CD8-positive, alpha-beta T cell (primary cell): ENCODE measurements at regions of chr12 and their contacts with region 1.

Region 1: DNA sequence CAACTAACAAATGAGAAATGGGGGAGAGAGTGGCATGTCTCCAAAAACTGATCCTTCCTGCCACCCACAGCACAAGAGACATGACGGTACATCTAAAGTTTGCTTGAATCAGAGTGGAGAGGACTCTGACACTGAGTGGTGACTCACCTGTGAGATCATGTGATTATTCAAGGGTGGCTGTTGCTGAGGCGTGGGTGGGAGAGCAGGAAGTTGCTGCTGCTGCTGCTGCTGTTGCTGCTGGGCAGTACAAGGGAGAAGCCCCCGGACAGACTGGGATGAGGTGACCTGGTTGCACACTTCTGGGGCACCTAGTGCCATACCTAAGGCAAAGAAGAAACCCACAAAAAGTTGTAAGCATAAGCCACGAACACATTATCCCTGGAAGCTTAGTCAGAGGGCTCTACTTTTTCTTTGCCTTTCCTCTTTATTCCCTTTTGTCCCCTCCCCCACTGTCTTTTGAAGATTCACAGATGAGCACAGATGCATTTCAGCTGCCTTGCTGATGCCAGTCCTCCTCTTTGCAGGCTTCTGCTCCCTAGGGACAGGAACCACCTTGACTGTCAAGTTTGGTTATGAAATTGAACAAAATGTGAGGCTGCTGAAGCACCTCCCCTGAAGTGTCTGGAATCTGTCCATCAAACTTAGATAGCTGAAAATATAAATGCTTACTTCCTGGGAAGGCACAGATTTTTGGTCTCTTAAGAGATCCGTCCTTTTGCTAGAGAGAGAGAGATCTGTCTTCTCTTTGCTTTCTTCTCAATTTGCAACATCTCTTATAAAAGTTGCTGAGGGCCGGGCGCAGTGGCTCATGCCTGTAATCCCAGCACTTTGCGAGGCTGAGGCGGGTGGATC is 29.4 kb upstream of the STAC3 start:
- DNase-seq: peak; percentile 15 to 82 (median 67)
- ATAC-seq: peak; percentile 99
- H3K4me3 ChIP-seq: no peak overlapping the region
- H3K4me3 Mint-ChIP-seq: peak overlapping the region; percentile 59
- H3K27ac ChIP-seq: peak overlapping the region; percentile 54 to 69
- H3K27ac Mint-ChIP-seq: peak overlapping the region; percentile 94
- H3K4me1 ChIP-seq: peaks cover 15% of the 10 kb centered on the region
- H3K4me1 Mint-ChIP-seq: peaks cover 21% of the 10 kb centered on the region
- H3K27me3 ChIP-seq: no peaks in the 10 kb centered on the region
- H3K27me3 Mint-ChIP-seq: no peaks in the 10 kb centered on the region
- CTCF ChIP-seq: no peak

Region 2: GRCh38 chr12:56873382-56873781 is 407.1 kb before region 1 on chr12:
- CTCF ChIA-PET with region 1: no interaction called
- POLR2A ChIA-PET with region 1: no interaction called
- intact Hi-C with region 1: no loop called
- DNase-seq: no peak
- ATAC-seq: no peak
- H3K4me3 ChIP-seq: no peak overlapping the region
- H3K4me3 Mint-ChIP-seq: no peak overlapping the region
- H3K27ac ChIP-seq: no peak overlapping the region
- H3K27ac Mint-ChIP-seq: no peak overlapping the region
- H3K4me1 ChIP-seq: no peaks in the 10 kb centered on the region
- H3K4me1 Mint-ChIP-seq: no peaks in the 10 kb centered on the region
- H3K27me3 ChIP-seq: no peaks in the 10 kb centered on the region
- H3K27me3 Mint-ChIP-seq: peaks cover 16% of the 10 kb centered on the region
- CTCF ChIP-seq: no peak

Region 3: GRCh38 chr12:57261428-57261865 is 19.0 kb before region 1 on chr12:
- CTCF ChIA-PET with region 1: interaction called, 5 read pairs
- POLR2A ChIA-PET with region 1: no interaction called
- intact Hi-C with region 1: loop called in 1 of 2 experiments (anchors 2 kb)
- DNase-seq: no peak
- ATAC-seq: no peak
- H3K4me3 ChIP-seq: no peak overlapping the region
- H3K4me3 Mint-ChIP-seq: no peak overlapping the region
- H3K27ac ChIP-seq: no peak overlapping the region
- H3K27ac Mint-ChIP-seq: no peak overlapping the region
- H3K4me1 ChIP-seq: no peaks in the 10 kb centered on the region
- H3K4me1 Mint-ChIP-seq: peaks cover 5% of the 10 kb centered on the region
- H3K27me3 ChIP-seq: no peaks in the 10 kb centered on the region
- H3K27me3 Mint-ChIP-seq: no peaks in the 10 kb centered on the region
- CTCF ChIP-seq: no peak

Region 4: DNA sequence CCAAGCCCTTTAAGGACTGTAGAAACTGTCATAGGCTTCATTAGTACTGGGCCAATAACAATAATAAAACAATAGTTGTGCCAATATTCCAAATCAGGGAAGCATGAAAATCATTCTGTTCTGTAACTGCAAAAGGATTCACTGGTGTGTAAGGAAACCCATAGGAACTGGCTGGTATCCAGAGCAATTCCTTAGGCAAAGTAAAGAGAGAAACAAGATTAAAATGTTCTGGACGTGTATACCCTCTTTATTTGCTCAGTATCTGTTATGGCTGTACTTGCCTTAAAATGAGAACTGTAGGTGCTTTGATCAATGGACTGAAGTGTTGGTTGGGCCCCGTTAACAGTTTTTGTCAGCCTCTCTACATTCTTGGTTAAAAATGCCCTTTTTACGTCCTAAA is 43.0 kb after region 1 on chr12:
- CTCF ChIA-PET with region 1: no interaction called
- POLR2A ChIA-PET with region 1: no interaction called
- intact Hi-C with region 1: no loop called
- DNase-seq: no peak
- ATAC-seq: no peak
- H3K4me3 ChIP-seq: no peak overlapping the region
- H3K4me3 Mint-ChIP-seq: no peak overlapping the region
- H3K27ac ChIP-seq: no peak overlapping the region
- H3K27ac Mint-ChIP-seq: no peak overlapping the region
- H3K4me1 ChIP-seq: no peaks in the 10 kb centered on the region
- H3K4me1 Mint-ChIP-seq: peaks cover 6% of the 10 kb centered on the region
- H3K27me3 ChIP-seq: no peaks in the 10 kb centered on the region
- H3K27me3 Mint-ChIP-seq: no peaks in the 10 kb centered on the region
- CTCF ChIP-seq: no peak

Region 5: GRCh38 chr12:58095002-58095401 is 814.6 kb after region 1 on chr12:
- CTCF ChIA-PET with region 1: no interaction called
- POLR2A ChIA-PET with region 1: no interaction called
- intact Hi-C with region 1: no loop called
- DNase-seq: no peak
- ATAC-seq: no peak
- H3K4me3 ChIP-seq: no peak overlapping the region
- H3K4me3 Mint-ChIP-seq: no peak overlapping the region
- H3K27ac ChIP-seq: no peak overlapping the region
- H3K27ac Mint-ChIP-seq: no peak overlapping the region
- H3K4me1 ChIP-seq: no peaks in the 10 kb centered on the region
- H3K4me1 Mint-ChIP-seq: no peaks in the 10 kb centered on the region
- H3K27me3 ChIP-seq: no peaks in the 10 kb centered on the region
- H3K27me3 Mint-ChIP-seq: peaks cover 22% of the 10 kb centered on the region
- CTCF ChIP-seq: no peak